Posterior vena cava (tissue), 2 donors: ENCODE measurements at regions of chr4 and their contacts with region 1.

Region 1: GRCh38 chr4:141458501-141458900 is 177.9 kb upstream of the IL15 start:
- DNase-seq: no peak

Region 2: GRCh38 chr4:139642364-139642763 is 1816.1 kb before region 1 on chr4:
- intact Hi-C with region 1: no loop called
- DNase-seq: no peak

Region 3: DNA sequence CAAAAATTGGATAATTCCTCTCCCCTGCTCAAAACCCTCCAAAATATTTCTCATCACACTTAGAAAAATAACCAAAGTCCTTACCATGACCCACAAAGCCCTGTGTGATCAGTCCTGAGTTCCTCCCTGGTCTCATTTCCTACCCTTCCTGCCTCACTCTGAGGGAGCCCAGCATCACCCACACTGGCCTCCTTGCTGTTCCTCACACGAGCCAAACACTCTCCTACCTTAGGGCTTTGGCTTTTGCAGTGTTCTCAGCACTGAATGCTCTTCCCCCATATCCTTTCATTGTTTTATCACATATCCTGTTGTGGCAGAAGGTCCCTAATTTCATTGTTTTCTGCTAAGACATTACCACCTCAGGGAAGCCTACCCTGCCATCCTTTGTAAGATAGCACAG is 972.6 kb before region 1 on chr4:
- intact Hi-C with region 1: no loop called
- DNase-seq: no peak

Region 4: DNA sequence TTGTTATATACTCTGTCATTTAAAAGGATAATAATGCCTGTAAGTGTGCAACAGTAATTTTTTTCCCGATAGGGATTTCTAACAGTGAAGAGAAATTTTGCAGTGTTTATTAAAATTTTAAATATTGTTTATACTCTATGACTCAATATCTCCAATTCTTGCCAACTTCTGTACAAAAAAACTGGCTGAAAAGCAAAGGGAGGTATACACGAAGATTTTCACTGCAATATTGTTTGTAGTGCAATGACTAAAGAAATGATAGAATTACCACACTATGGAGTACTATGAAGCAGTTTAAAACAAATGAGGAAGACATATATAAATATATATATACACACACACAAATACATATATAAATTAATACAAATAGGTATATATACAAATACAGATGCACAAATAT is 10.0 kb before region 1 on chr4:
- intact Hi-C with region 1: loop called in 1 of 2 experiments (anchors 1 kb)
- DNase-seq: no peak

Region 5: DNA sequence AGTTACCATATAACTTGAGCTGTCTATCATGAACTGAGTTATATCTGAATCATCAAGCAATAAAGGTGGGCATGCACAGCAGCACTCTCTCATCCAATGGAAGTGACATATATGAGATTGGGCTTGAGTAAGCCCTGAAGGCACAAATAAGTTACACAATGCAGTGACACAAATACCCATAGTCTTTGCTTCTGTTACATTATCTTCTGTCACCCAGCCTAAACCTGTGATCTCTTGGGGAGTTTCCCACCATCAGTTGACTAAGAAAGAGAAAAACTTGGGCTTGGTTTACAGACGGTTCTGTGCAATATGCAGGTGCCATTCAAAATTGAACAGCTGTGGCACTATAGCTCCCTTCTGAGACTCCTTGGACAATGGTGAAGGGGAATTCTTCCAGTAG is 39.1 kb after region 1 on chr4:
- intact Hi-C with region 1: no loop called
- DNase-seq: no peak

Region 6: DNA sequence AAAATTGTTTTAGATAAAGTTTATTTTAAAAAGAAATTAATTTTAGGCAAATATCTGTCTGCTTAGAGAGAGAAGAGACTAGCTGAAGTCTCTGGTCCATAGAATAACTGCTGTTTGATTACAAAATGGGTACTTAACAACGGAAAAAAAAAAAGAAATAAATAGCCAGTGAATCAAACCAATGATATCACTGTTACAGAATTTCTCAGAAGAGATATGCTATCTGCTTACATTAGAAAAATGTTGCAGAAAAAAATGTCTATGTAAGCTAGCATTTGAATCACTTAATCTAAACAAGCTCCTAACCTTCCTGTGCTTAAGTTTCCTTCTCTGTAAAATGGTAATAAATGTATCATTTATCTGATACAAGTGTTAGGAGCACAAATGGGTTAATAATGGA is 367.8 kb after region 1 on chr4:
- intact Hi-C with region 1: no loop called
- DNase-seq: no peak